Activated T-helper 1 cell treated with anti-CD3 and anti-CD28 coated beads, Interleukin-12 subunit alpha, Interleukin-12 subunit beta, Interleukin-2, Interleukin-4 antibody, amounts not matched to agents 30 ng/mL and 10 ng/mL and 1 ng/mL, durations not matched to agents 14 hours and 24 hours and 36 hours (primary cell): ENCODE measurements at regions of chr3 and their contacts with region 1.

Region 1: GRCh38 chr3:56862352-56863074 is 60.8 kb upstream of the ARHGEF3 start:
- DNase-seq: no peak
- H3K4me3 Mint-ChIP-seq: peak overlapping the region; percentile 38
- H3K27ac Mint-ChIP-seq: peak overlapping the region; percentile 90
- H3K4me1 Mint-ChIP-seq: peaks cover 75% of the 10 kb centered on the region
- H3K27me3 Mint-ChIP-seq: no peaks in the 10 kb centered on the region

Region 2: DNA sequence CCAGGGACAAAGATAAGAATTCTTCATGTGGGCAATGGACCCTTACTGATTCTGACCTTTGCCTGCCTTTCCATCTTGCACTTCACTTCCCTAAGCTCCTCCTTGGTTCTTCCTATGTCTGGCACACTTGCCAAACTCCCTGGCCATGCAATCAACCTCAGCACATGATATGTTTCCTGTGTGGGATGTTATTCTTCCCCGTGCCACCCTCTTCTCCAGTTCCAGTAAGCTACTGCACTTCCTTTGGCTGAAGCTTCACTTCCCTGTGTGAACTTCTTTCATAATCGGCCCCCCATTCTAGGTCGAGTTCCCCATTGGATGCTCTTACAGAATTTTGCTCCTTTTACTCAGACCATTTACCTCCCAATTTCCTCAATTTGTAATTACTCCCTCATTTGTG is 168.8 kb before region 1 on chr3:
- intact Hi-C with region 1: loop called (anchors 2 kb)
- DNase-seq: no peak
- H3K4me3 Mint-ChIP-seq: peak overlapping the region; percentile 54
- H3K27ac Mint-ChIP-seq: no peak overlapping the region
- H3K4me1 Mint-ChIP-seq: peaks cover 37% of the 10 kb centered on the region
- H3K27me3 Mint-ChIP-seq: no peaks in the 10 kb centered on the region

Region 3: GRCh38 chr3:56753206-56753820 is 109.2 kb before region 1 on chr3:
- intact Hi-C with region 1: loop called (anchors 1 kb)
- DNase-seq: peak; percentile 47
- H3K4me3 Mint-ChIP-seq: peak overlapping the region; percentile 67
- H3K27ac Mint-ChIP-seq: peak overlapping the region; percentile 83
- H3K4me1 Mint-ChIP-seq: peaks cover 68% of the 10 kb centered on the region
- H3K27me3 Mint-ChIP-seq: no peaks in the 10 kb centered on the region

Region 4: GRCh38 chr3:56790016-56790821 is 72.3 kb before region 1 on chr3:
- intact Hi-C with region 1: loop called (anchors 1 kb)
- DNase-seq: peak; percentile 35
- H3K4me3 Mint-ChIP-seq: peak overlapping the region; percentile 70
- H3K27ac Mint-ChIP-seq: peak overlapping the region; percentile 89
- H3K4me1 Mint-ChIP-seq: peaks cover 86% of the 10 kb centered on the region
- H3K27me3 Mint-ChIP-seq: no peaks in the 10 kb centered on the region

Region 5: GRCh38 chr3:56878074-56878473 is 15.6 kb after region 1 on chr3:
- intact Hi-C with region 1: loop called (anchors 1 kb)
- DNase-seq: peak; percentile 14
- H3K4me3 Mint-ChIP-seq: peak overlapping the region; percentile 72
- H3K27ac Mint-ChIP-seq: peak overlapping the region; percentile 92
- H3K4me1 Mint-ChIP-seq: peaks cover 76% of the 10 kb centered on the region
- H3K27me3 Mint-ChIP-seq: no peaks in the 10 kb centered on the region

Region 6: DNA sequence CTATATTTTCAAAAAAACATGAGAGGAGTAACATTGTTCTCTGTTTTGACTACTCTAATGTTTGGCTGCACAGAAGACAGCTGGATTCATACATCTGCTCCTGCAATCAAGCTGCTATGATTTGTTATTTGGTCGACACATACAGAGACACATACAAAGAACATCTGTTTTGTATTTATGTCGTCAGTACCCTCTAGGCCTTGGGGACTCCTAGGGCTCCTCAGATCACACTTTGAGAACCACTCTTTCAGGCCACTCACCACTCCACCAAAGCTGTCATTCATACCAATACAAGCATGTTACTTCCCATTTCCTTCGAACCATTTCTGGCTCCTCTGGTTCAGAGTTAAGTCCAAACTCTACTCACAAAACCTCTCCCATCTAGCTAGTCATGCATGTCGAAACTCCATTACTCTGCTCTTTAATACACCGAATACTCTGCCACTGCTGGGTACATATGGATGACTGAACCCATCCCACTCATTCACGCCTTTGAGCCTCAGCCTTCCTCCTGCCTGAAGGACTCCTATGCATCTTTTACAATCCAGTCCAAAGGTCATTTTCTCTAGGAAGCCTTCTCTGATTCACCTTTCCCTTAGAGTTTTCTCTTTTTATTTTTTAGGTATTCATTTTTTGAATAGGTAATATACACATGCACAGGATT is 42.2 kb after region 1 on chr3:
- intact Hi-C with region 1: no loop called
- DNase-seq: no peak
- H3K4me3 Mint-ChIP-seq: no peak overlapping the region
- H3K27ac Mint-ChIP-seq: no peak overlapping the region
- H3K4me1 Mint-ChIP-seq: peaks cover 59% of the 10 kb centered on the region
- H3K27me3 Mint-ChIP-seq: no peaks in the 10 kb centered on the region

Region 7: DNA sequence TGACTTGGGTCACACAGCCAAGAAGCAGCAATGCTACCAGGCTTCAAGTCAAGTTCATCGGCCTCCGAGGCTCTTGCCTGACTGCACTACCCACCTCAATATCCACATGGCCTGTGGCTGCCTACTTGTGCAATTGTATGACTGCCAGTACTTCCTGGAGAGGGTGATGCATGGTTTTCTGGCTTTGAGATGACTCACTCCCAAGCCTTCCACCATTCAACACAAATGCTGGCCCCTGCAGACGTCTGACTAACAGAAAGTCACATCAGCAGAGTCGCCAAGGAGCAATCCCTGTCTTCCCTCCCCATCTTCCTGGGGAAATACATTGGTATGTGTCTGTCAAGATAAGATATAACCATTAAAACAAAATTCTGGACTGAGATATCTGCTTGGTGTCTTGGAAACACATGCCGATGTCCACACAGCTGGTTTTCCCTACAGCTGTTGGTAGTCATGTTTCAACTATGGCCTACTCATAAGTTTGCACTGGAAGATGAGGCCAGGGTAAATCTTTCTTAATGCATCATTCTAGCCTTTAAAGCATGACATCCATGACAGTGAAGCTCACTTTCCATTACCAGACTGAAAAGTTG is 118.4 kb after region 1 on chr3:
- intact Hi-C with region 1: loop called (anchors 2 kb)
- DNase-seq: peak; percentile 10
- H3K4me3 Mint-ChIP-seq: no peak overlapping the region
- H3K27ac Mint-ChIP-seq: peak overlapping the region; percentile 40
- H3K4me1 Mint-ChIP-seq: peaks cover 31% of the 10 kb centered on the region
- H3K27me3 Mint-ChIP-seq: no peaks in the 10 kb centered on the region